Tibial artery (tissue), 4 donors: ENCODE measurements at regions of chr16 and their contacts with region 1.

Region 1: GRCh38 chr16:50644729-50645128 is 36.4 kb downstream of the SNX20 start:
- DNase-seq: peak in 1 of 2 donors; percentile 76
- H3K4me3 ChIP-seq: no peak overlapping the region
- H3K27ac ChIP-seq: peak overlapping the region in 1 of 2 donors; percentile 17
- H3K4me1 ChIP-seq: peaks cover 0 to 25% (median 7%) of the 10 kb centered on the region in 4 donors
- H3K27me3 ChIP-seq: no peaks in the 10 kb centered on the region
- CTCF ChIP-seq: peak; percentile 44 to 54

Region 2: GRCh38 chr16:50368410-50369132 is 276.2 kb before region 1 on chr16 and contains the start of gene BRD7:
- intact Hi-C with region 1: loop called (anchors 5 kb)
- DNase-seq: peak; percentile 33 to 85
- H3K4me3 ChIP-seq: peak within 1 kb of the TSS; percentile 87 to 97
- H3K27ac ChIP-seq: peak within 1 kb of the TSS; percentile 77 to 87
- H3K4me1 ChIP-seq: peaks cover 0 to 70% (median 44%) of the 10 kb centered on the region in 4 donors
- H3K27me3 ChIP-seq: no peaks in the 10 kb centered on the region
- CTCF ChIP-seq: peak; percentile 40 to 73

Region 3: DNA sequence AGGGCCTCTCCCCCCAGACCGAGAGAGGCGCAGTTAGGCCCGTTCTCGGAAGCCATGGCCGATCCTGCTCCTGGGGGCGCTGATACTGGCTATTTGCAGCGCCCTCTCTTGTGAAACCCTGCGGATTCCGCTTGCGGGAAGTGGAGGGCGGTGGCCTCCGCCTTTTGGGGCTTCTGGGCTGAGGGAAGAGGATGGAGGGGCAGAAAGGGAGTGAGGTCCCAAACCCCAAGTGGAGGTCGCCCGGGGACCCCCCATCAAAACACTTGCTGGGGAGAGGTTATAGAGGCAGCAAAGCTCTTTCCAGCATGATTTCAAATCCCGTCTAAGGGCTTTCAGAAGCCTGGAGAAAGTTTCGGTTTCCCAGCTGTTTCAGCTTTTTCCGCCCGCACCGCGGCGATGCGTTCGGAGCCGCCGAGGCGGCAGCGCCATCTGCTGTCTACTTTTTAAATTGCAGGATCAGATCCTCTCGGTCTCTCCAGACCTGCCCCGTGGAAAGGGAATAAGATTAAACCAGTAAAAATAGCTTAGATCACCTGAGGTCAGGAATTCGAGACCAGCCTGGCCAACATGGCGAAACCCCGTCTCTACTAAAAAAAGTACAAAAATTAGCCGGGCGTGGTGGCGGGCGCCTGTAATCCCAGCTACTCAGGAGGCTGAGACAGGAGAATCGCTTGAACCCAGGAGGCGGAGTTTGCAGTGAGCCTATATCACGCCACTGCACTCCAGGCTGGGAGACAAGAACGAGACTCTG is 20.6 kb after region 1 on chr16:
- intact Hi-C with region 1: no loop called
- DNase-seq: peak; percentile 66 to 88
- H3K4me3 ChIP-seq: peak overlapping the region; percentile 50 to 56
- H3K27ac ChIP-seq: peak overlapping the region; percentile 64 to 67
- H3K4me1 ChIP-seq: peaks cover 0 to 33% (median 12%) of the 10 kb centered on the region in 4 donors
- H3K27me3 ChIP-seq: no peaks in the 10 kb centered on the region
- CTCF ChIP-seq: peak; percentile 85 to 91

Region 4: DNA sequence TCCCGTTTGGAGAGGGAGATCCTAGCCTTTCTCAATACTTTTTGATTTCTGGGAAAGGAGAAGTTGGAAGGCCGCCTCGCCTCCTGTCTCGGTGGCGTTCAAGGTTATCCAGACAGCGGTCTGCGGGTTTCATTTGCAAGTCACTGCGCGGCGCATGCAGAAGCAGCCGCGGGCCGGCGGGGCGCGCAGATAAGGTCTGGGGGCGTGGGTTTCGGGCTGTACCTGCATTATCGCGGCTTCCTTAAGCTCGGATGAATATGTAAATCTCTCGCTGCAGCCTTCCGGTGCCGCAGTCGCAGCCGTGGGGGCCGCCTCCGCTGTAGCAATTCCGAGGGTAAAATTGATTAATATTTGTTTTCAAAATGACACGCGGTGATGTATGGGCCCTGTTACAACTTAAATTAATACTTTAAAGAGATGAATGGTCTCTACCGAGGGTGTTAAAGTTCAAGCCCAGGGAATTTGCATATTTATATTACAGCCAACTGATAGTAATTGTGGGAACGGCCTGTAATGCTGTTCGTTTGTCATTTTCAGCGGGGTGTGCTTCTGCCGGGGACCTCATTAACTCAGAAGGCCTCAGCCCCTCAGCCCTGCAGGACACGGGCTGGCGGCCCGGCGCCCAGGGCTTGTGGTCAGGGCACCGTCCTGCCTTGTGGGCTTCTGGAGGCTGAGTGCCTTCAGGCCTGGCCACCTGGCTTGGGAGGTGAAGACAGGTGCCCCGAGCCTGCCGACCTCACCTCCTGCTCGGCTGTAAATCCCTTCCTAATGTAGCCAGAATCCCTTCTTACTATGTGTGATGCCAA is 196.6 kb after region 1 on chr16:
- intact Hi-C with region 1: no loop called
- DNase-seq: no peak
- H3K4me3 ChIP-seq: peak overlapping the region in 1 of 2 donors; percentile 26
- H3K27ac ChIP-seq: no peak overlapping the region
- H3K4me1 ChIP-seq: peaks cover 0 to 8% (median 2%) of the 10 kb centered on the region in 4 donors
- H3K27me3 ChIP-seq: peaks cover 0 to 24% of the 10 kb centered on the region in 2 donors
- CTCF ChIP-seq: no peak